AG04449 (cell line): ENCODE measurements at regions of chr11 and their contacts with region 1.

Region 1: DNA sequence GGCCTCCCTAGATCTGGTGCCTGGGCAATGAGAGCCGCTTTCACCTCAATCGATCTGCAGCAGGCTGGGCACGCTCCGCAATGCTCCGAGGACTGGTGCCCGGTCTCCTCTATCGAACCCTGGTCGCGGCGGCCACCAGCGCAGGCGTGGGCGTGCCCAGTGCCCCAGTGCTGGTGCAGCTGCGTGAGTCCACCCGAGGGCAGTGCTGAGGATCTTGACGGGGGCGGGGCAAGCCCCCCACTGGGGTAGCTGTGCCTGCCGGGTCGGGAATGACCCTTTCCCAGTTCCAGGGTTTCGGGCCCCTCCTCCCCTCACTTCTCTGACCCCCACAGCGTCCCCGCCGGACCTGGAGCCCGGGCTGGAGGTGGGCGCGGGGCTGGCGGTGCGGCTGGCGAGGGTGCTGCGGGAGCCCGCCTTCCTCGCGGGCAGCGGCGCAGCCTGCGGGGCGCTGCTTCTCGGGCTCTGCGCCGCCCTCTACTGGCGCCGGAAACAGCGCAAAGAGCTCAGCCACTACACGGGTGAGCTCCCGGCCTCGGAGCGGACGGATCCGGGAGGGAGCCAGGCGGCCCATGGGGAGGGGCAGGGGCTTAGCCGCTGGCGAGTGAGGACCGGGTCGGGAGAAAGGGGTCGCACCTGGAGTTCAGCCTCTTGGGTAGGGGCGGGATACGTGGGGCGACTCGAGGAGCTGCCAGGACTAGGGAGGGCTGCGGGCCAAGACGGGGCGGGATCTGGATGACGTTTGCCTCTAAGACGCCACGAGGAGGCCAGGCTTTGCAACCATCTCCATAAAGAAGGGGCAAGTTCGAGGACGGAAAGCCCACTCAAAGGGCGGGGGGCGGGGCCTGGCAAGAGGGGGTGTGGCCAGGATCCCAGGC is 10.9 kb downstream of the ROBO3 start:
- DNase-seq: peak; percentile 53
- H3K4me3 ChIP-seq: peak overlapping the region; percentile 72
- CTCF ChIP-seq: peak; percentile 94

Region 2: DNA sequence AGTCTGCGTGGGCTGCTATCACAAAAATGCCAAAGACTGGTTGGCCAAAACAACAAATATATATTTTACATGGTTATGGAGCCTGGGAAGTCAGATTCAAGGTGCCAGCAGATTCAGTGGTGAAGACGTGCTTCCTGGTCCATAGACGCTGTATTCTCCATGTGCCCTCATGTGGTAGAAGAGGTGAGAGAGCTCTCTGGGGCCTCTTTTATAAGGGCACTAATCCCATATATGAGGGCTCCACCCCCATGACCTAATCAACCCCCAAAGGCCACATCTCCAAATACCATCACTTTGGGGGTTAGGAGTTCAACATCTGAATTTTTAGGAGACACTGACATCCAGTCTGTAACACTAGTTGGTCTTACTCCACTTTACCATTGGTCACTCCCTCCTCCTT is 20.7 kb before region 1 on chr11:
- CTCF ChIA-PET with region 1: interaction called, 11 read pairs
- POLR2A ChIA-PET with region 1: no interaction called
- DNase-seq: no peak
- H3K4me3 ChIP-seq: no peak overlapping the region
- CTCF ChIP-seq: no peak

Region 3: DNA sequence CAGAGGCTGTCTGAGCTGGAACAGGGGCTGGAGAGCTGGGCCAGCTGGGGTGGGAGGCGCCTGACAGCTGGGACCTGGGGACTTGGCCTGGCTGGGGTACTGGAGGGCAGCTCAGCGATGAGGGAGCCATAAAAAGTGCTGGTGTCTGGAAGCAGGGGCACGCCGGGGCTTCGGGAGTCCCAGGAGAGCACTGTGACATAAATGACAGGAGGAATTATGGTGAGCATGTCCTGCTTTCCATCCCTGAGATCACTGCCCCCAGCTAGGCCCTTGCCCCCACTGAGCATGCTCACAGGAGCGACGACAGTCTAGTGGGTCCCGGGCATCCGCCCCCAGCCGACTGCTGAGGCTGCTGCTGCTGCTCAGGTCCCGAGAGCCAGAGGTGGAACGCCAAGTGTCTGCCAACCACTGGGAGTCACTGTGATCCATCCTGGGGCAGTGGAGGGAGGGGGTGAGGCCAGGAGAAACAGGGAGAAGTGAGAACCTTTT is 15.2 kb after region 1 on chr11:
- CTCF ChIA-PET with region 1: interaction called, 78 read pairs
- POLR2A ChIA-PET with region 1: interaction called, 5 read pairs
- DNase-seq: no peak
- H3K4me3 ChIP-seq: no peak overlapping the region
- CTCF ChIP-seq: peak; percentile 17

Region 4: DNA sequence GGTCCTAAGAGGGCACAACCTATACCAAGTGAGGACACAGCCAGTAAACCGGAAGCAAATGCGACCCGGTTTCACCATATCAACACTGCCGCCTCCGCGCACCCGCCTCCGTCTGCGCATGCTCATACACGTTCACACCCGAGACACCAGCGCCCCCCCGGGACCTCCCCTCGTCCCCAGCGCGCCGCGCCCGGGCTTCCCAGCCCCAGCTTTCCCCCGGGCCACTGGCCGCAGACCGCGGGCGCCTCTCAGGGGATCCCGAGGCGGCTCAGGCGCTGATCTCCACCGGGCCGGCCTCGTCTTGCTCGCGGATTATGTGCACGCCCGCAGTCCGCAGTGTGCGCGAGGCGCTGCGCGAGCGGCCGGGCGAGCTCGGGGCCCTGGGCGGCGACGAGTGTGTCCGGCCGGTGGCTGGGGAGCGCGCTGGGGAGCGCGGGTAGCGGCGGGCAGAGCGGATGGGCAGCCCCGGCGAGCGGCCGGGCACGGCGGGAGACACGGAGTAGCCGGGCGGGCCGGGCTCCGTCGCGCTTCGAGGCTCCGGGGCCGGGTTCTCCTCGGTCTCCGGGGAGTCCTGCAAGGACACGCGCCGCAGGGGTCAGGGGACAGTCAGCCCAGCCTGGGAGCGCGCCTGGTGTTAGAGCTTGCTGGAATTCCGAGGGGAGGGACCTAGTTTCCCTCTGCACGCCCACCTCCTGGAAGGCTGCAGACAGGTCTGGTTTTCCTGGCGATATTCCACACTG is 44.9 kb after region 1 on chr11:
- CTCF ChIA-PET with region 1: interaction called, 15 read pairs
- POLR2A ChIA-PET with region 1: no interaction called
- DNase-seq: no peak
- H3K4me3 ChIP-seq: peak overlapping the region; percentile 54
- CTCF ChIP-seq: peak; percentile 5

Region 5: GRCh38 chr11:124943254-124943616 is 67.1 kb after region 1 on chr11:
- CTCF ChIA-PET with region 1: interaction called, 13 read pairs
- POLR2A ChIA-PET with region 1: no interaction called
- DNase-seq: no peak
- H3K4me3 ChIP-seq: no peak overlapping the region
- CTCF ChIP-seq: no peak

Region 6: GRCh38 chr11:124983674-124984511 is 107.7 kb after region 1 on chr11:
- CTCF ChIA-PET with region 1: no interaction called
- POLR2A ChIA-PET with region 1: no interaction called
- DNase-seq: no peak
- H3K4me3 ChIP-seq: no peak overlapping the region
- CTCF ChIP-seq: no peak

Region 7: DNA sequence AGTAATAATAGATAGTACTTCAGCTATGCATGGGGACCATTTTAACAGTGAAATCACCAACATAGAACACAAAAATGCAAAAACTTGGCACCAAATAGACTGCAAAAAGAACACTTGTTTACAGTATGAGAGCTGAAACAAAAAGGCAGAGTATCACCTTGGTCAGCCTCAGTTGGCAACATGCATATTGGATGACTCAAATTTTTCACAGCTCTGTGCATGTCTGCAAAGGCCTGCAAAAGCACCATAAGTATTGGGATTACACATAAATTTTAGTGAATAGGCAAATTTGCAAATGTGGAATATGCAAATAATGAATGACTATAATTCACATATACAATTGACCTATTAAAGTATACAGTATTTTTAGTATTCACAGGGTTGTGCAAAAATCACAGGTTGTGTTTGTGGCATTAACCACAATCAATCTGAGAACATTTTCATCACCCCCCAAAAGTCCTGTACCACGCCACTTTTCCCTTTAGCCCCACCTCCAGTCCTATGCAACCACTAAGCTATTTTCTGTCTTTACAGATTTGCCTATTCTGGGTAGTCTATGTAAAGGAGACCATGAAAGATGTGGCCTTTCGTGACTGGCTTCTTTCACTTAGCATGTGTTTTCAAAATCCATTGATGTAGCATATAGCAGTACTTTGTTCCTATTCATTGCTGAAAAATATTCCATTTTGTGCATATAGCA is 125.0 kb after region 1 on chr11:
- CTCF ChIA-PET with region 1: no interaction called
- POLR2A ChIA-PET with region 1: no interaction called
- DNase-seq: no peak
- H3K4me3 ChIP-seq: no peak overlapping the region
- CTCF ChIP-seq: no peak